Activated naive CD8-positive, alpha-beta T cell treated with anti-CD3 and anti-CD28 coated beads, Interleukin-2, amount 10 ng/mL, durations not matched to agents 7 days and 5 days (primary cell): ENCODE measurements at regions of chr2 and their contacts with region 1.

Region 1: GRCh38 chr2:196263181-196263747 is 91.9 kb upstream of the STK17B start:
- DNase-seq: no peak
- ATAC-seq: peak; percentile 76
- H3K4me3 Mint-ChIP-seq: peak overlapping the region; percentile 79
- H3K27ac Mint-ChIP-seq: peak overlapping the region; percentile 92
- H3K4me1 Mint-ChIP-seq: peaks cover 65% of the 10 kb centered on the region
- H3K27me3 Mint-ChIP-seq: no peaks in the 10 kb centered on the region

Region 2: DNA sequence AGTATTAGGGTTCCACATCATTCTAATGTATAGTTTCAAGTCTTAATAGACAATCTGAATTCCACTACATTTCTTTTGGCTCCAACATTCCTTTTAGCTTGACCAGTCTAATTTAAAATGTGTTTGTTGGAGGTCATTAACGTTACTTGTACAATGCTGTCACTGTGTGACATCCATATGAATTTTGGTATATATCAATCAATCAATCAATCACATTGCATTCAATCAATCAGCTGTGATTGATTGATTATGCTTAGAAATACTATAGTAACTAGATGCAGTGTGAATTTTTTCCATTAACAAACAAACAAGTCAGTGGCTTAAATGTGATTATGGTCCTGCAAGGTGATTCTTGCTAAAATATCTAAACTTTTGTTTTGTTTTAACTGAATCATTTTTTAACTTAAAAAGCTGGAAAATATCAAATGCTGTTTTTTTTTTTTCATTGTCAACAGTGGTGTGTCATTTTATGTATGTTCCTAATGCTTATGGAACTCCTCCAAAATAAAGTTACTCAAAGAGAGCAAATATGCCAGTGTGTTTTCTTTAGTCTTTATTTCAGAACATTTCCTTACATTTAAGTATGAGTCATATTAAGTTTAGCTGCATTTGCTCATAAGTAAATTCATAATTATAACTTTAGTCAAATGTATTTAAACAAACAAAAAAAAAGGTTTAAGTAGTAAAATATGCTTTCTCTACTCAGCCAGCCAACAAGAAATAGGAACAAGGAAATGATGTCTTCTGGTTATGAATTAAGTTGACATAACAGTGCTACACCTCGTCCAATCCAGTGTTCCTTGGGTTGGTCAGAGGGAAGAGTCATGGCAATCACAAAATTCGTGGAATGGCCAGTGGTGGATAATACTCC is 525.9 kb before region 1 on chr2:
- POLR2A ChIA-PET with region 1: no interaction called
- DNase-seq: no peak
- ATAC-seq: no peak
- H3K4me3 Mint-ChIP-seq: no peak overlapping the region
- H3K27ac Mint-ChIP-seq: no peak overlapping the region
- H3K4me1 Mint-ChIP-seq: no peaks in the 10 kb centered on the region
- H3K27me3 Mint-ChIP-seq: no peaks in the 10 kb centered on the region

Region 3: GRCh38 chr2:195985731-195986130 is 277.5 kb before region 1 on chr2:
- POLR2A ChIA-PET with region 1: no interaction called
- DNase-seq: no peak
- ATAC-seq: no peak
- H3K4me3 Mint-ChIP-seq: peak overlapping the region; percentile 0
- H3K27ac Mint-ChIP-seq: no peak overlapping the region
- H3K4me1 Mint-ChIP-seq: no peaks in the 10 kb centered on the region
- H3K27me3 Mint-ChIP-seq: peaks cover 2% of the 10 kb centered on the region

Region 4: DNA sequence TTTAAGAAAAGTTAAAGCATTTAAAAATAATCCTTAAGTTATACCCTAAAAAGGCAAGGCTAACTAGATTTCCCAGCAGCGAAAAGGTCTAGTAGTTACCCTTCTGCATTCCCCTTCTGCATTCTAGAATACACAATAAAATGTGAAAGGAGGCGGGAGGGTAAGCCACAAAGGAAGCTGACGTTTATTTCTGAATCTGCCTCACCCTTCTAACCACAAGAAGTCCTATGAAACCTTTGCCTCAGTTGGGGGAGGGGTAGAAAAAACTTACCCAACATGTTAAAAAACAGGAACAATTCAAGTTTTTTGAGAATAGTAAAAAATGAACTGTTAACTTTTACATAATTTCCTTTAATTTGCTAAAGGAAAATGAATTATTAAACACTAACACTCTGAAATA is 103.2 kb before region 1 on chr2:
- POLR2A ChIA-PET with region 1: interaction called, 139 read pairs
- DNase-seq: no peak
- ATAC-seq: peak; percentile 20
- H3K4me3 Mint-ChIP-seq: peak overlapping the region; percentile 89
- H3K27ac Mint-ChIP-seq: peak overlapping the region; percentile 92
- H3K4me1 Mint-ChIP-seq: peaks cover 60% of the 10 kb centered on the region
- H3K27me3 Mint-ChIP-seq: no peaks in the 10 kb centered on the region

Region 5: DNA sequence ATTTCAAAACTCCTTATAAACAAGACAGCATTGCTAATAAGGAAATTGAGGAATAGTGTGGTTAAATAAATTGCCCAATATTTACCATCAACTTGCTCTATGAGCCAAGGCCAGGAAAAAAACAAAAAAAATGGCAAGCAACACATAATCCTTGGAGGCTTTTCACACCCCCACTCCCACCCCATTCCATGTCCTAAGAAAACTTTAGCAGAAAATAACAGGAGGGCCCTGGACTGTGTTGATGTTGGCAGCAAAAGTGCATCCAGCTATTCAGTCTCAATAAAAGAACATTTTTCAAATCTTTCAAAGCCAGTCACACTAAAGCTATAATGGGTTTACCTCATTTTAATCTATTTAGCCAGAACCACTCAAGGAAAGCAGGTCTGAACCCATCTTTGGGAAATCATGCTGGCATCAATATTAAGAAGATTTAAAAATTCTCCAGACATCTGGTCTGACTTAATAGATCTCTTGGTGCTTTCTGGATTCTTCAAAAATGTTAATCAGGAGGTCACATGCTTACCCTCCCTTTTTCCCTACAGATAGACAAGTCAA is 57.3 kb before region 1 on chr2:
- POLR2A ChIA-PET with region 1: interaction called, 24 read pairs
- DNase-seq: no peak
- ATAC-seq: no peak
- H3K4me3 Mint-ChIP-seq: no peak overlapping the region
- H3K27ac Mint-ChIP-seq: no peak overlapping the region
- H3K4me1 Mint-ChIP-seq: peaks cover 30% of the 10 kb centered on the region
- H3K27me3 Mint-ChIP-seq: no peaks in the 10 kb centered on the region

Region 6: GRCh38 chr2:196239622-196240587 is 23.4 kb before region 1 on chr2:
- POLR2A ChIA-PET with region 1: interaction called, 223 read pairs
- DNase-seq: peak; percentile 80
- ATAC-seq: peak; percentile 62
- H3K4me3 Mint-ChIP-seq: peak overlapping the region; percentile 78
- H3K27ac Mint-ChIP-seq: peak overlapping the region; percentile 93
- H3K4me1 Mint-ChIP-seq: peaks cover 70% of the 10 kb centered on the region
- H3K27me3 Mint-ChIP-seq: no peaks in the 10 kb centered on the region